ENCODE measurements at regions of chr7 and their contacts with region 1.

Region 1: GRCh38 chr7:150432915-150433892 is 17.2 kb upstream of the GIMAP8 start:
- DNase-seq: no peak
- H3K4me3 ChIP-seq: no peak overlapping the region
- H3K27me3 ChIP-seq: no peaks in the 10 kb centered on the region
- CTCF ChIP-seq: no peak

Region 2: DNA sequence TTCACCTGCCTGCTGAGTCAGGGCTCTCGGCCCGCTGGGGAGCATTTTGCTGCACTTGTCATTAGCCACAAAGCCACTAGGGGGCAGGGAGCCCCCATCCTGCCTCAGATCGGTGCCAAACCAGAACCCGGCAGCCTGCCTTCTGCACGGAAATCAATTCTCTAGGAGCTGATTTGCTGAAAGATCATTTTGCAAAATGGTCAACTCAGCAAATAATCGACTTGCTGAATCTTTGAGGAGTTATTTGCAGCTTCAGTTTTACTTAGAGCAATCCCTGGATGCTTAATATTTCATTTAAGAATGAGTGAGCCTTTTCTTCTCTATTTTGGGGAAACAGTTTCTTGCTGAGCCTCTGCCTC is 15.6 kb after region 1 on chr7:
- CTCF ChIA-PET with region 1: interaction called, 16 read pairs
- POLR2A ChIA-PET with region 1: no interaction called
- DNase-seq: no peak
- H3K4me3 ChIP-seq: no peak overlapping the region
- H3K27me3 ChIP-seq: peaks cover 3% of the 10 kb centered on the region; the same call in 1 of the 2 replicates
- CTCF ChIP-seq: peak; percentile 93